ENCODE measurements at regions of chr2 and their contacts with region 1.

Region 1: DNA sequence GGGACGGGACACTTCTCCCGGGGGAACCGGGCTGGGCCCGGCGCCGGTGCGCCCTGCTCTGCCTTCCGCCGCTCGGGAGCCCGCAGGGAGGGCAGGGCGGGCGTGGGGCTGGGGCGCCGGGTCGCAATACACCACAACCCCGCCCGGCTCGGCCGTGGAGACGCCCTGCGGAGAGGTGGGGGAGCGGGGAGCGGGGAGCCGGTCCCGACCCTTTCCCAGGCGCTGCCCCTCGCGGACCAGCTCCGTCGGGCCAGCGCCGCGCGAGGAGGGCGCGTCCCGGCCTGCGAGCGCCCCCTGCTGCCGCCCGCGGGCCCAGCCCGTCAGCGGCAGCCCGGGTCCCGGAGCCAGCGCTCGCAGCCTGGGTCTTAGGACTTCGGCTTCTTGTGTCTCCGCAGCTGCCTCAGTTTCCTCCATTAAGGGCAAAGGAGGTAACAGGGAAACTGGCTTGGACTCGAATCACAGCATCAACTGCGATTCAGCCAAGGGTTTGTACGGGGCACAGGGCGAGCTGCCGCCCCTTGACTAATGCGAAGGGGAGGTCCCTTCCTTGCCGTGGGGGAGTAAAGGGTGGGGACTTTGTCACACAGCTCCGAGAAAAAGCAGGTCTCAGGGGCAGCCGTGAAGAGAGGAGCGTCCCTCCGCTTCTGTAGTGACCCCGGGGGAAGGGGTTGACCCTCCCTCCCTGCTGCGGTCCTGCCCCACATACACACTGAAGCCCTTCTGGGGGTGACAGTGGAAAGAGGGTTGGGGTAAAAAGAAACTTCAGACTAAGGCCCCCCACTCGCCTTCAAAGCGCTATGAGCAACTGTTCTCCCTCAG is 717 bp upstream of the ADRA2B start:
- DNase-seq: peak; percentile 30 to 68
- ATAC-seq: peak; percentile 68 to 93 (median 86)
- H3K4me3 ChIP-seq: peak overlapping the region; percentile 29 to 78 (median 62)
- H3K27ac ChIP-seq: peak overlapping the region in 9 of 10 donors; percentile 23 to 83 (median 73)
- H3K4me1 ChIP-seq: peaks cover 0 to 33% (median 12%) of the 10 kb centered on the region in 9 donors
- H3K27me3 ChIP-seq: peaks cover 0 to 62% (median 28%) of the 10 kb centered on the region in 7 donors
- CTCF ChIP-seq: peak; percentile 67 to 98 (median 92)

Region 2: GRCh38 chr2:95757988-95758387 is 359.1 kb before region 1 on chr2:
- intact Hi-C with region 1: no loop called
- DNase-seq: no peak
- ATAC-seq: no peak
- H3K4me3 ChIP-seq: no peak overlapping the region
- H3K27ac ChIP-seq: no peak overlapping the region
- H3K4me1 ChIP-seq: no peaks in the 10 kb centered on the region
- H3K27me3 ChIP-seq: peaks cover 0 to under 1% (median 0%) of the 10 kb centered on the region in 7 donors
- CTCF ChIP-seq: no peak

Region 3: GRCh38 chr2:96024336-96025193 is 92.5 kb before region 1 on chr2:
- intact Hi-C with region 1: loop called in 4 of 10 experiments (anchors 10 kb)
- DNase-seq: no peak
- ATAC-seq: peak in 1 of 8 donors; percentile 4
- H3K4me3 ChIP-seq: no peak overlapping the region
- H3K27ac ChIP-seq: no peak overlapping the region
- H3K4me1 ChIP-seq: peaks cover 0 to 7% (median 0%) of the 10 kb centered on the region in 9 donors
- H3K27me3 ChIP-seq: no peaks in the 10 kb centered on the region
- CTCF ChIP-seq: no peak

Region 4: DNA sequence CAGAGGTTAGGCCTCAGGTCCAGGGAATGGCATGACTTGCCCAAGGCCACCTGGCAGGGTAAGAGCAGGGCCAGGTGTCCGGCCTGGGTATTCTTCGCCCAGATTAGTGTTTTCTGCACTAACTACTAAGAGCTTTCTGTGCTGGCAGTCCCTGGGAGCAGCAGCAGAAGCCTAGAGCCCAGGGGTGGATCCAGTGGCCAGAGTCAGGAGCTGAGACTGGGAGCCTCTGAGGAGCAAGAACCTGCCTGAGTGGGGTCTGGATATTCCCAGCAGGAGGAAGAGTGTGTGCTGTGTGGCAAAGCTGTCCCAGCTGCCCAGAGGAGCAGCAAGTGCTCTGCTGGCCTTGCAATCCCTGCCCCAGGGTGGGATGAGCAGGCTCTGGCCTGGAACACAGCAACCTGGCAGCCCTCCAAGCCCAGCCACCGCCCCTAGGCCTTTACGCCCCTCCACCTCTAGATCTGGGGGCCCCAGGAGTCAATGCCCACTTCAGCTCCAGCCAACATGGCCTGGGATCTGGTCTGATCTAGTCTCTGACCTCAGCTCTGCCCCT is 51.6 kb before region 1 on chr2:
- intact Hi-C with region 1: loop called in 5 of 10 experiments (anchors 2 to 10 kb)
- DNase-seq: no peak
- ATAC-seq: no peak
- H3K4me3 ChIP-seq: no peak overlapping the region
- H3K27ac ChIP-seq: no peak overlapping the region
- H3K4me1 ChIP-seq: peaks cover 0 to 5% (median 0%) of the 10 kb centered on the region in 9 donors
- H3K27me3 ChIP-seq: no peaks in the 10 kb centered on the region
- CTCF ChIP-seq: no peak

Region 5: GRCh38 chr2:96072746-96073145 is 44.3 kb before region 1 on chr2:
- intact Hi-C with region 1: loop called in 4 of 10 experiments (anchors 5 to 10 kb)
- DNase-seq: no peak
- ATAC-seq: peak in 3 of 8 donors; percentile 12 to 34 (median 17)
- H3K4me3 ChIP-seq: no peak overlapping the region
- H3K27ac ChIP-seq: peak overlapping the region in 1 of 10 donors; percentile 56
- H3K4me1 ChIP-seq: peaks cover 0 to 21% (median 0%) of the 10 kb centered on the region in 9 donors
- H3K27me3 ChIP-seq: no peaks in the 10 kb centered on the region
- CTCF ChIP-seq: no peak

Region 6: DNA sequence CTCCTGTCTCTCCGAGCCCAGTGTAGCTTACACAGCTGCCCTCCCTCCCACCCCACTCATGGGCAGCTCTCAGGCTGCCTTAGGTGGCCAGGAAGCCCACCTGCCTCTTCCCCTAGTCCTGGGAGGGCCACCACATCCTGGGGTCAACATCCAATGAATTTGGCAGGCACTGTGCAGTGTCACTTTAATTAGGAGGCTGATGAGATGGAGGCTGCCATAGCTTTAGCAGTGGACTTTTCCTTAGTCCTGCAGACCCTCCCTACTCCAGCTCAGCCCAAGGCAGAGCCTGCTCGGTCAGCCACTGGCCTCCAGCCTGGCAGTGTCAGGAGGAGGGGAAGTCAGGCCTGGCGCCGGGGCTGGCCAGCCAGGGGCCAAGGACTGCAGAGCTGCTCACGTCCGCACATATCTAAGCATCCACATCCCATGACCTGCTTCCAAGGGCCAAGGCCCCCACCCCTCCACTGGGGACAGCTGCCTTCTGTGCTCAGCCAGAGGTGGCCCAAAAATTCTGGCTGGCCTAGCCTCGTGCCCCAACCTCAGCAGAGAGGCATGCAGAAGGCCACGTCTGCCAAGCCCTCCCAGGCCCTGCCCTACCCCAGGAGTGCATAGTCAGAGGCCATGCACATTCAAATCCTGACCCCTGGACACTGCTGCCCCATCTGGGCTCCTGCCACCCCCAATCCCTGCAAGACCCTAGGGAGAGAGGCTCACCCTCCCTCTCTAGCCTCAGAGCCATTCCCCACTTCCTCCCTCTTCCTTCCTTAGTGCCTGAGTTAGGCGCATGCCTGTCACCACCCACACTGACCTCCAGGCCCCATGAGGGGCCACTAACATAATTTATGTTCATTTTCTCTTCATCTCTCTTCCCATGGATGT is 33.8 kb before region 1 on chr2:
- intact Hi-C with region 1: loop called in 2 of 10 experiments (anchors 5 kb)
- DNase-seq: peak; percentile 58 to 61
- ATAC-seq: peak; percentile 63 to 92 (median 88)
- H3K4me3 ChIP-seq: no peak overlapping the region
- H3K27ac ChIP-seq: peak overlapping the region; percentile 37 to 90 (median 74)
- H3K4me1 ChIP-seq: peaks cover 16 to 38% (median 32%) of the 10 kb centered on the region in 9 donors
- H3K27me3 ChIP-seq: no peaks in the 10 kb centered on the region
- CTCF ChIP-seq: no peak

Region 7: GRCh38 chr2:96095116-96095636 is 21.9 kb before region 1 on chr2:
- intact Hi-C with region 1: no loop called
- DNase-seq: no peak
- ATAC-seq: no peak
- H3K4me3 ChIP-seq: no peak overlapping the region
- H3K27ac ChIP-seq: no peak overlapping the region
- H3K4me1 ChIP-seq: peaks cover 11 to 55% (median 37%) of the 10 kb centered on the region in 9 donors
- H3K27me3 ChIP-seq: no peaks in the 10 kb centered on the region
- CTCF ChIP-seq: no peak